ENCODE measurements at regions of chr5 and their contacts with region 1.

Region 1: GRCh38 chr5:170225326-170226128 is 7.3 kb upstream of the C5orf58 start:
- DNase-seq: peak; percentile 68 to 77 (median 72)
- ATAC-seq: peak; percentile 93
- H3K4me3 ChIP-seq: no peak overlapping the region
- H3K27ac ChIP-seq: no peak overlapping the region
- H3K4me1 ChIP-seq: no peaks in the 10 kb centered on the region
- H3K27me3 ChIP-seq: no peaks in the 10 kb centered on the region
- CTCF ChIP-seq: peak; percentile 76 to 91 (median 86)
- EP300 ChIP-seq: no peak
- POLR2A ChIP-seq: no peak
- RAD21 ChIP-seq: peak; percentile 93 to 97

Region 2: DNA sequence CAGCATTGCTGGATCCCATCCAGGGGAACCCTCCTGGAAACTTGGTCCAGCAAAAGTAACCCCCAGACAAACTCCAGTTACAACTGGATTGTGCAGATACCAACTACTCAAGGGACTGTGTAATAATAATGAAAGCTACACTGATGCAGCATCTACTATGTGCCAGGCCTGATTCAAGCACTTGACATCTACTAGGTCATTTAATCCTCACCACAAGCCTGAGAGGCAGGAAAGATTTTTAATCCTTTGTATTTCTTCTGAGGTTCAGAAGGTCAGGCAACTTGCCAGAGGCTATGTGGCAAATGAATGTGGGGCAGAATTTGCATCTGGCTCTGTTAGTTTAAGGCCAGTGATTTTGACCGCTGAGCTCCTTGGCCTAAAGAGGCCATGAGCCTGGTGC is 149.3 kb before region 1 on chr5:
- CTCF ChIA-PET with region 1: no interaction called
- POLR2A ChIA-PET with region 1: no interaction called
- in situ Hi-C with region 1: no loop called
- intact Hi-C with region 1: no loop called
- DNase-seq: no peak
- ATAC-seq: no peak
- H3K4me3 ChIP-seq: no peak overlapping the region
- H3K27ac ChIP-seq: no peak overlapping the region
- H3K4me1 ChIP-seq: no peaks in the 10 kb centered on the region
- H3K27me3 ChIP-seq: no peaks in the 10 kb centered on the region; a peak in 1 of 5 replicates
- CTCF ChIP-seq: no peak
- EP300 ChIP-seq: no peak
- POLR2A ChIP-seq: no peak
- RAD21 ChIP-seq: no peak

Region 3: GRCh38 chr5:170200876-170201275 is 24.7 kb before region 1 on chr5:
- CTCF ChIA-PET with region 1: no interaction called
- POLR2A ChIA-PET with region 1: no interaction called
- in situ Hi-C with region 1: no loop called
- intact Hi-C with region 1: no loop called
- DNase-seq: no peak
- ATAC-seq: no peak
- H3K4me3 ChIP-seq: no peak overlapping the region
- H3K27ac ChIP-seq: no peak overlapping the region
- H3K4me1 ChIP-seq: peaks cover 0 to 9% of the 10 kb centered on the region in 2 experiments; a peak in 2 of 5 replicates
- H3K27me3 ChIP-seq: peaks cover 13 to 24% of the 10 kb centered on the region in 2 experiments; a peak in 4 of 5 replicates
- CTCF ChIP-seq: no peak
- EP300 ChIP-seq: no peak
- POLR2A ChIP-seq: no peak
- RAD21 ChIP-seq: no peak

Region 4: DNA sequence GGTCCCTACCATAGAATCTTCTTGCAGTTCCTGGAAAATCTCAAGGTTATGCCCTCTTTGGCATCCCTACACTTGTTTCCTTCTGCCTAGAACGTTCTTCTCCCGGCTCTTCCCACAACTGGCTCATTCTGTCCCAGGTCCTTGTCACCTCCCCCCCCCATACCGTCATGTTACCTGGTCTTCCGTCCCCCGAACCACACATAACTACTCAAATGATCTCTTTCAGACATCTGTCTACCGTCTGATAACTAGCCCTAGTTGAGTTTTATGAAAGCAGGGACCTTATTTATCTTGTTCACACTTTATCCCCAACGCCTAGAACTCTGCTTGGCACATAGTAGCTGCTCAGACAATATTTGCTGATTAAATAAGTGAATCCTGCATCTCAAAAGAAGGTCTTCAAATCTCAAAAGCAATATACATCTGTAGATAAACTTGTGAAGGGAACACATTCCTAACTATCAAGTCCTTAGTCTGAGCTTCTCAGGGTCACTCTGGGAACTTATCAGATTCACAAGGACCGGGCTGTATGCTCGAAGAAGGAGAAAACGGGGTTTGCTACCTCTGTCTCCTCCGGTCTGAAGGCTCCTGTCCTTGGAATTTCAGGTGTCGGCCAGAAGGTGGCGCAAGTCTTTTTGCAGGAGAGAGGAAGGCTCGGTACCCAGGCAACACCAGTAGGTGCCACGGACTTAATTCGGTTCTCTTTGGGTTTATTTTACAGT is 42.1 kb after region 1 on chr5:
- CTCF ChIA-PET with region 1: no interaction called
- POLR2A ChIA-PET with region 1: no interaction called
- in situ Hi-C with region 1: no loop called
- intact Hi-C with region 1: loop called (anchors 2 kb)
- DNase-seq: peak; percentile 76 to 85 (median 81)
- ATAC-seq: peak; percentile 92
- H3K4me3 ChIP-seq: no peak overlapping the region
- H3K27ac ChIP-seq: no peak overlapping the region
- H3K4me1 ChIP-seq: peaks cover 7 to 22% of the 10 kb centered on the region in 2 experiments; a peak in 4 of 5 replicates
- H3K27me3 ChIP-seq: peaks cover 0 to 4% of the 10 kb centered on the region in 2 experiments; a peak in 2 of 5 replicates
- CTCF ChIP-seq: peak; percentile 84 to 86 (median 85)
- EP300 ChIP-seq: no peak
- POLR2A ChIP-seq: no peak
- RAD21 ChIP-seq: peak; percentile 78 to 82

Region 5: DNA sequence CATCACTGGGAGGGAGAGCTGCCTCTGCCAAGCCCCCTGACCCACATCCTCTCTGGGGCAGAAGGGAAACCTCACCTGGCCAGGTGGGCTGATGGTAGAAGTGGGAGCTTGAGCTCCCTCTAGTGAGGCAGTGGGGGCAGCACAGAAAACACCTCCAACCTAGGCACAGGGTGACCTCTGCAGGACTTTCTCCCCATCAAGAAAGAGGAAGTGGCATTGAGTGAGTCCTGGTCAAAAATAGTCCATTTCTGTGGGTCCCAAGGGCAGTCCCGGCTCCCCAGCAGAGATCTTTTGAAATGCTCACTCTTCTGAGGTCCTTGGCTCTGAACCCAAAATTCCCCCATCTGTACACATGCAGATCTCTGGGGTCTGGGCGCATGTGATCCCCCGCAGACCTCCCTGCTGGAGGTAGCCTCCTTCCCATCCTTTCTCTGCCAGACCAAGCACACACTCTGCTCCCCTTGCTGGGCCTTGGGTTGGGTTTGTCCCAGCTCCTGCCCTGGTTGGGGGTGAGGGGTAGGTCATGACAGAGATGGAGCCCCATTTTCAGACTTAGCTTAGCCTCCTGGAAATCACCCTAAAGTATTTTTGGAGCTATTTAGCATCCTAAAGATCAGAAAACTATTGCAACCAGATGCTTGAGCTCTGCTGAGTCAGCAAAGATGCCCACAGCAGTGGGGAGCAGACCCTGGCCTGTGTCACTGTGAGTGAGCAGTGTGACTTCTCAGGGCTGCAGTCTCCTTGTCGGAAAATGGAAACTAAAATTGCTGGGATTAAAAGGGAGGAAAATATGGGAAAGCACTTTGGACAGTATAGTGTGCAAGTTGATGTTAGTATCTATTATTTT is 113.6 kb after region 1 on chr5:
- CTCF ChIA-PET with region 1: interaction called, 58 read pairs
- POLR2A ChIA-PET with region 1: no interaction called
- in situ Hi-C with region 1: loop called (anchors 5 kb)
- intact Hi-C with region 1: loop called (anchors 1 kb)
- DNase-seq: peak; percentile 46 to 77 (median 60)
- ATAC-seq: peak; percentile 89
- H3K4me3 ChIP-seq: no peak overlapping the region
- H3K27ac ChIP-seq: no peak overlapping the region
- H3K4me1 ChIP-seq: peaks cover 0 to 9% of the 10 kb centered on the region in 2 experiments; a peak in 3 of 5 replicates
- H3K27me3 ChIP-seq: no peaks in the 10 kb centered on the region; a peak in 3 of 5 replicates
- CTCF ChIP-seq: peak; percentile 95 to 100 (median 99)
- EP300 ChIP-seq: no peak
- POLR2A ChIP-seq: no peak
- RAD21 ChIP-seq: peak; percentile 98 to 100

Region 6: GRCh38 chr5:170420780-170421412 is 195.4 kb after region 1 on chr5:
- CTCF ChIA-PET with region 1: interaction called, 22 read pairs
- POLR2A ChIA-PET with region 1: no interaction called
- in situ Hi-C with region 1: loop called (anchors 5 kb)
- intact Hi-C with region 1: loop called (anchors 1 kb)
- DNase-seq: peak; percentile 70 to 72 (median 72)
- ATAC-seq: peak; percentile 89
- H3K4me3 ChIP-seq: no peak overlapping the region
- H3K27ac ChIP-seq: no peak overlapping the region
- H3K4me1 ChIP-seq: no peaks in the 10 kb centered on the region
- H3K27me3 ChIP-seq: peaks cover 0 to 11% of the 10 kb centered on the region in 2 experiments; a peak in 2 of 5 replicates
- CTCF ChIP-seq: peak; percentile 65 to 74 (median 73)
- EP300 ChIP-seq: no peak
- POLR2A ChIP-seq: no peak
- RAD21 ChIP-seq: peak; percentile 66 to 79

Region 7: DNA sequence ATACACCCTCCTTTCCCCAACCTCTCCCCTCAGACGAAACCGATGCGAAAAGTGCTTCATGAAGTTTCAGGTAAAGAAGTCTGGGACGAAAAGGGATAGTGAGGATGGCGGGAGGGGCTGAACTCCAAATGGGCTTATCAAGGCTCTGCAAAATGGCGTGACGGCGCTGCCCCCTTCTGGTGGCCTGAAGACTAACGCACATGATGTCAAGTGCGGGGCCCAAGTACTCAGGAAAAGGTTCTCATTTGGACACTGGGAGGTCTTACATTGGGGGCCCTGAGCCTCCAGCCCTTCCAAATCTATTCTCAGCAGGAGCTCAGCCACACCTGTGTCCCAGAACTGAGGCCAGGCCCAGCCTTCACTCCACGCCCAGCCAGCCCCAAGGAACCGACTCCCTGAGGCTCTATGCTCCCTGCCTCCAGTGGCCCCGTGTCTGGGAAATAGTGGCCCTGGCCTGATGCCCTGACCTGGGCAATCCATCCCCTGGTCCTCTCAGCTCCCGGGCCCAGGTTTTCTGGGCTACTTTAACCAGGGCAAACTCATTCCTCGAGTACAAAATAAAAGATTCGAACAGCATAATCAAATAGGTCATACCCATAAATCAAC is 398.2 kb after region 1 on chr5:
- CTCF ChIA-PET with region 1: interaction called, 5 read pairs
- POLR2A ChIA-PET with region 1: no interaction called
- in situ Hi-C with region 1: loop called (anchors 10 kb)
- intact Hi-C with region 1: loop called (anchors 5 kb)
- DNase-seq: peak; percentile 55 to 65 (median 56)
- ATAC-seq: peak; percentile 93
- H3K4me3 ChIP-seq: no peak overlapping the region
- H3K27ac ChIP-seq: no peak overlapping the region
- H3K4me1 ChIP-seq: no peaks in the 10 kb centered on the region
- H3K27me3 ChIP-seq: peaks cover 0 to 9% of the 10 kb centered on the region in 2 experiments; a peak in 1 of 5 replicates
- CTCF ChIP-seq: peak; percentile 62 to 78 (median 73)
- EP300 ChIP-seq: no peak
- POLR2A ChIP-seq: no peak
- RAD21 ChIP-seq: peak in 1 of 2 experiments; percentile 65; a peak in 3 of 4 replicates

Region 8: DNA sequence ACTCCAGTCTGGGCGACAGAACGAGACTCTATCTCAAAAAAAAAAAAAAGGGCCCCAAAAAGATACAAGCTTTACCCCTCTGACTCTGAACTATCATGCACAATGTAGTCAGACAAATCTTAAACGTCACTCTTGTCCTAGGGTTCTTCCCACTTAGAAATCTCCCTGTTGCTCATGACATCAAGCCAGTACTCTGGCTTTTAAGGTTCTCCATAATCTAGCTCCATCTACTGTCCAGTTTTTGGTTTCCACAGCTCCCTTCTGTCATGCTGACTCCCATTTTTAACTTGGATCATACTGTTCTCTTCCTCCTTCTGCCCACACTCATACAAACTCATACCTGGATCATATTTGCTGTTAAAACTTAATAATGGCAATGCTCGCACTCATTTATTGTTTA is 926.9 kb after region 1 on chr5:
- CTCF ChIA-PET with region 1: no interaction called
- POLR2A ChIA-PET with region 1: no interaction called
- in situ Hi-C with region 1: no loop called
- intact Hi-C with region 1: no loop called
- DNase-seq: peak in 2 of 4 experiments; percentile 4 to 9
- ATAC-seq: peak; percentile 63; the same call in 2 of the 3 replicates
- H3K4me3 ChIP-seq: no peak overlapping the region
- H3K27ac ChIP-seq: no peak overlapping the region
- H3K4me1 ChIP-seq: no peaks in the 10 kb centered on the region
- H3K27me3 ChIP-seq: no peaks in the 10 kb centered on the region
- CTCF ChIP-seq: peak in 2 of 3 experiments; percentile 20 to 22; a peak in 2 of 6 replicates
- EP300 ChIP-seq: no peak
- POLR2A ChIP-seq: no peak
- RAD21 ChIP-seq: 0 out of 4 replicates have a peak, but pooled peaks of 1 of the 2 experiments have one; percentile 31

Measured in K562 (cell line).